ENCODE measurements at regions of chr12 and their contacts with region 1.

Region 1: DNA sequence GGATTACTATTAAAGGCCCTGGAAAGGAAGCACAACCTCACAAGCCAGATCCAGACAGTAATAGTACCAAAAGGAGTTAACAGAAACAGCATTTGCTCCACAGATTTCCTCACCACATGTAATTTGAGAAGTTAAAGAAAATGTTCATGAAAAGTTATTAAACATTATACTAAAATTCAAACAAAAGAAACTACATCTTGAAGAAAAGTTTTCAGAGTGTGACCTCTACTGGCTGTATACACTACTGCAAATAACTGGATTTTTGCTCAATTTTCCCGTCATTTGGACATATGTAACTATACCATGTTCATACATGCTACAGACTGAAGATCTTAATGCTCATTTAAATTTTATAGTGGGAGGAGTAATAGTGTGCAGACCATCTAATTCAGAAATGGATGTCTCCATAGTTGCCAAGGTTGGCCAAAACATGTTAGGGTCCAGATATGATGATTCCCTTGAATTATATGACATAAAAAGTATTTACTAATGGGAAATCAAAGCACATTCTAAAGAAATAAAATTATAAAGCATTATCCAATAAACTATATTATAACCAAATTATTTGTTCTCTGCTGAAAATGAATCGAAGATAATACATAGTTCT is 5.6 kb downstream of the KRR1 start:
- DNase-seq: peak in 4 of 9 donors; percentile 18 to 42 (median 29)
- ATAC-seq: peak; percentile 75
- H3K4me3 ChIP-seq: no peak overlapping the region
- H3K4me3 Mint-ChIP-seq: no peak overlapping the region
- H3K27ac ChIP-seq: no peak overlapping the region
- H3K27ac Mint-ChIP-seq: peak overlapping the region in 4 of 9 donors; percentile 0 to 71 (median 5)
- H3K4me1 ChIP-seq: peaks cover 12 to 13% of the 10 kb centered on the region in 2 donors
- H3K4me1 Mint-ChIP-seq: peaks cover 14 to 38% (median 32%) of the 10 kb centered on the region in 7 donors
- H3K27me3 ChIP-seq: no peaks in the 10 kb centered on the region
- H3K27me3 Mint-ChIP-seq: no peaks in the 10 kb centered on the region

Region 2: GRCh38 chr12:75334384-75335030 is 171.3 kb before region 1 on chr12 and contains the start of gene GLIPR1L1:
- CTCF ChIA-PET with region 1: interaction called, 7 read pairs
- POLR2A ChIA-PET with region 1: no interaction called
- intact Hi-C with region 1: loop called (anchors 1 kb)
- DNase-seq: peak; percentile 58 to 79 (median 74)
- ATAC-seq: peak; percentile 91
- H3K4me3 ChIP-seq: no peak within 1 kb of the TSS
- H3K4me3 Mint-ChIP-seq: peak within 1 kb of the TSS; percentile 18 to 80 (median 74)
- H3K27ac ChIP-seq: no peak within 1 kb of the TSS
- H3K27ac Mint-ChIP-seq: peak within 1 kb of the TSS in 1 of 9 donors; percentile 3
- H3K4me1 ChIP-seq: peaks cover 0 to 5% of the 10 kb centered on the region in 2 donors
- H3K4me1 Mint-ChIP-seq: peaks cover 11 to 29% (median 18%) of the 10 kb centered on the region in 7 donors
- H3K27me3 ChIP-seq: peaks cover 0 to 6% of the 10 kb centered on the region in 2 donors
- H3K27me3 Mint-ChIP-seq: peaks cover 16 to 56% (median 31%) of the 10 kb centered on the region in 5 donors
- total RNA-seq, gene GLIPR1L1: not detected

Region 3: GRCh38 chr12:75862692-75863471 is 357.1 kb after region 1 on chr12:
- CTCF ChIA-PET with region 1: no interaction called
- POLR2A ChIA-PET with region 1: no interaction called
- intact Hi-C with region 1: no loop called
- DNase-seq: no peak
- ATAC-seq: no peak
- H3K4me3 ChIP-seq: no peak overlapping the region
- H3K4me3 Mint-ChIP-seq: no peak overlapping the region
- H3K27ac ChIP-seq: no peak overlapping the region
- H3K27ac Mint-ChIP-seq: no peak overlapping the region
- H3K4me1 ChIP-seq: no peaks in the 10 kb centered on the region
- H3K4me1 Mint-ChIP-seq: peaks cover 0 to 4% (median 0%) of the 10 kb centered on the region in 7 donors
- H3K27me3 ChIP-seq: no peaks in the 10 kb centered on the region
- H3K27me3 Mint-ChIP-seq: no peaks in the 10 kb centered on the region

Region 4: DNA sequence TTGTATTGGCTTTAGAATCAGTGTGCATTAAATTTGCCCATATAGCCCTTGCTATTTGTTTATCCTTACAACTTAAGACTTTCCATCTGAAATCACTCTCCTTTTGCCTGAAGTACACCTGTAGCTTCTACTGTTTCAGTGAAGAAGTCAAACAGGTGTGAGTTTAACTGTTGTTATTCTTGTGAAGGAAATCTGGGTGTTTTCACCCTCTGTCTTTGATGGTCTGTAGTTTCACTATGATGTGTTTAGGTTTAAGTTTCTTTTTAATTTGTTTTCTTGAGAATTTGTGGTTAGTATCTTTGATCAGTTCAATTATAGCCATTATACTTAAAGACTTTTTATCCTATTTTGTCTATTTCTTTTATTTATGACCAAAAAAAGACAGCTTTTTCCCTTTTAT is 911.3 kb after region 1 on chr12:
- CTCF ChIA-PET with region 1: no interaction called
- POLR2A ChIA-PET with region 1: no interaction called
- intact Hi-C with region 1: no loop called
- DNase-seq: no peak
- ATAC-seq: no peak
- H3K4me3 ChIP-seq: no peak overlapping the region
- H3K4me3 Mint-ChIP-seq: peak overlapping the region in 1 of 10 donors; percentile 23
- H3K27ac ChIP-seq: no peak overlapping the region
- H3K27ac Mint-ChIP-seq: peak overlapping the region in 5 of 9 donors; percentile 4 to 52 (median 48)
- H3K4me1 ChIP-seq: no peaks in the 10 kb centered on the region
- H3K4me1 Mint-ChIP-seq: peaks cover 13 to 37% (median 26%) of the 10 kb centered on the region in 7 donors
- H3K27me3 ChIP-seq: no peaks in the 10 kb centered on the region
- H3K27me3 Mint-ChIP-seq: no peaks in the 10 kb centered on the region